ENCODE measurements at regions of chr10 and their contacts with region 1.

Region 1: DNA sequence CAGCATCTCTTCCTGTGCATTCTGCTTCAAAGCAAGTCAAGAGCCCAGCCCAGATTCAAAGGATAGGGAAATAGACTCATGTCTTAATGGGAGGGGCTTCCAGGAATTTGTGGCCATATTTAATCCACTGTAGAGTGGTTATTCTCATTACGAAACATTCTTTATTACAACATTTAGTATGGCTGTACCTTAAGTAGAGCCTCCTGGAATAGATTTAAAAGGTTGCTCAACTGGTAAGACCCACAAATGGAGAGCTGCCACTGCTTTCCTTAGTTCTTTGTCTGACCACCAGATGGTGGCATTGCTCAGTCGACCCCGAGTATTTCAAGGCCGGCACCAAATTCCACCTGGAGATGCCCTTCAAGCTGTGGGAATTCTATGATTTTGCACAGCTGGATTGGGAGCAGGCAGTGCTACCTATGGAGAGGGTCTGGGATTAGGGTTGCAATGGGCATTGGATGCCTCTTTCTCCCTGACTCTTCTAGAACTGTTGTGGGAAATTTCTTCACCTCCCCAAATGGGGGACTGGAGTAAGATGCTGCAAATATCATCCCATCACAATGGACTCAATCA is 102.2 kb downstream of the RBM20 start:
- DNase-seq: peak; percentile 71
- H3K4me3 ChIP-seq: no peak overlapping the region
- H3K27ac ChIP-seq: no peak overlapping the region; a peak in 1 of 4 replicates
- H3K4me1 ChIP-seq: peaks cover 9 to 11% of the 10 kb centered on the region in 2 experiments; a peak in 3 of 4 replicates
- H3K27me3 ChIP-seq: no peaks in the 10 kb centered on the region
- CTCF ChIP-seq: peak; percentile 87
- EP300 ChIP-seq: 0 out of 4 replicates have a peak, but pooled peaks of 1 of the 2 experiments have one; percentile 28
- RAD21 ChIP-seq: peak; percentile 98

Region 2: GRCh38 chr10:110717781-110718589 is 28.4 kb before region 1 on chr10:
- CTCF ChIA-PET with region 1: no interaction called
- POLR2A ChIA-PET with region 1: no interaction called
- DNase-seq: peak; percentile 34
- H3K4me3 ChIP-seq: no peak overlapping the region
- H3K27ac ChIP-seq: peak overlapping the region in 1 of 2 experiments; percentile 25; a peak in 1 of 4 replicates
- H3K4me1 ChIP-seq: peaks cover 0 to 19% of the 10 kb centered on the region in 2 experiments; a peak in 1 of 4 replicates
- H3K27me3 ChIP-seq: no peaks in the 10 kb centered on the region
- CTCF ChIP-seq: no peak
- EP300 ChIP-seq: no peak
- RAD21 ChIP-seq: no peak

Region 3: GRCh38 chr10:110779489-110779888 is 33.1 kb after region 1 on chr10:
- CTCF ChIA-PET with region 1: interaction called, 14 read pairs
- POLR2A ChIA-PET with region 1: no interaction called
- DNase-seq: no peak
- H3K4me3 ChIP-seq: no peak overlapping the region
- H3K27ac ChIP-seq: peak overlapping the region in 1 of 2 experiments; percentile 50; a peak in 1 of 4 replicates
- H3K4me1 ChIP-seq: peaks cover 2 to 48% of the 10 kb centered on the region in 2 experiments; a peak in 2 of 4 replicates
- H3K27me3 ChIP-seq: no peaks in the 10 kb centered on the region
- CTCF ChIP-seq: no peak
- EP300 ChIP-seq: no peak
- RAD21 ChIP-seq: no peak

Region 4: DNA sequence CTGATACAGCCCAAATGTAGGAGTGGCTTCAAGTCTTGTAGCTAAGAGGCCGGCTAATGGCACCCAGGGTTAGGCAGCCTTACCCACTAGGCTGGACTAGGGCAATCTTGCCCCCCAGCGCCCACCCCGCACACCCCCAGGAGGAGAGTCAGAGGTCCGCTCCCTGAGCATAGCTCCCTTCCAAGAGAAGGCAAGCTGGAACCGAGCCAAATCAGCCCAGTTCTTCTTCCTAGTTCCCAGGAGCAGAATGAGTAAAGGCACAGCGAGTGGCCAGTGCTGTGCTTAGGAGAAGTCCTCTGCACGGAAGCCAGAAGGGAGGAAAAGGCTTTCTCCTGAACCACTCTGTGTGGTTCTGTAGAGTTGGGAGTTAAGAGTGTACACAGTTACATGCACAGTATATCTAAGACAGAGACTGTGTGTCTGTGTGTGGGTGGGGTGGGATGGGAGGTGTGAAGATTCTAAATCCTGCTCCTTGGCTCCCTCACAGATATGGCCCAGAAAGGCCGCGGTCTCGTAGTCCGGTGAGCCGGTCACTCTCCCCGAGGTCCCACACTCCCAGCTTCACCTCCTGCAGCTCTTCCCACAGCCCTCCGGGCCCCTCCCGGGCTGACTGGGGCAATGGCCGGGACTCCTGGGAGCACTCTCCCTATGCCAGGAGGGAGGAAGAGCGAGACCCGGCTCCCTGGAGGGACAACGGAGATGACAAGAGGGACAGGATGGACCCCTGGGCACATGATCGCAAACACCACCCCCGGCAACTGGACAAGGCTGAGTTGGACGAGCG is 65.6 kb after region 1 on chr10:
- CTCF ChIA-PET with region 1: interaction called, 14 read pairs
- POLR2A ChIA-PET with region 1: no interaction called
- DNase-seq: no peak
- H3K4me3 ChIP-seq: no peak overlapping the region
- H3K27ac ChIP-seq: no peak overlapping the region
- H3K4me1 ChIP-seq: peaks cover 0 to 3% of the 10 kb centered on the region in 2 experiments; a peak in 1 of 4 replicates
- H3K27me3 ChIP-seq: no peaks in the 10 kb centered on the region
- CTCF ChIP-seq: no peak
- EP300 ChIP-seq: no peak
- RAD21 ChIP-seq: no peak

Region 5: DNA sequence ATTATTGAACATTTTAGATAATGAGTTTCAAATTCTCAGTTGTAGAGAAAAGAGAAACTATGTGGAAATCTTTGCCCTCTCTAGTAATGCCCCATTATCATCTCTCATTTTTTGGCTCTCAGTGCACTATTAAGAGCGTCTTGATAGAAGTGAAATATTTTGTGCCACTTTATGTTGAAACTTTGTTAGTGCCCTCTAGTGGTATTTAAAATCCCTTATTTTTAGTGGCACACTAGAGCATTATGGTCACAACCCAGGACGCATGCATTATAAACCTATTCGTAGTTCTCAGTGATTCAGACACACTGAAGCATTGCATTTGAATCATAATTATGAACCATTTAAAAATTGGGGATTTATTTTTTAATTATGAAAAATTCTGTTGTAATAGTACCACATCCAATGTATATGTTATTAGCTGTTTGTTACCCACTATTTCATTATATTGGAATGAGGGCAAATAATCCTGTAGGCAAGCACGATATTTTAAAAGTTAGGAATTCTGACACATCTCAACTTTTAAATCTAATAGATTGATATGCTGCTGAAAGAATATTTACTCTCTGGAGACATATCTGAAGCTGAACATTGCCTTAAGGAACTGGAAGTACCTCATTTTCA is 147.3 kb after region 1 on chr10:
- CTCF ChIA-PET with region 1: interaction called, 36 read pairs
- POLR2A ChIA-PET with region 1: no interaction called
- DNase-seq: peak; percentile 41
- H3K4me3 ChIP-seq: no peak overlapping the region
- H3K27ac ChIP-seq: no peak overlapping the region; a peak in 1 of 4 replicates
- H3K4me1 ChIP-seq: peaks cover 0 to 6% of the 10 kb centered on the region in 2 experiments; a peak in 1 of 4 replicates
- H3K27me3 ChIP-seq: no peaks in the 10 kb centered on the region
- CTCF ChIP-seq: peak; percentile 71
- EP300 ChIP-seq: no peak
- RAD21 ChIP-seq: peak; percentile 73